ENCODE measurements at regions of chr2 and their contacts with region 1.

Region 1: GRCh38 chr2:10448208-10448645 is at the start of gene ODC1:
- DNase-seq: peak; percentile 90
- H3K4me3 Mint-ChIP-seq: peak within 1 kb of the TSS; percentile 100
- H3K27ac Mint-ChIP-seq: peak within 1 kb of the TSS; percentile 98
- H3K4me1 Mint-ChIP-seq: peaks cover 45% of the 10 kb centered on the region
- H3K27me3 Mint-ChIP-seq: peaks cover 1% of the 10 kb centered on the region
- total RNA-seq, gene ODC1: 235 and 247 TPM in 2 replicates

Region 2: DNA sequence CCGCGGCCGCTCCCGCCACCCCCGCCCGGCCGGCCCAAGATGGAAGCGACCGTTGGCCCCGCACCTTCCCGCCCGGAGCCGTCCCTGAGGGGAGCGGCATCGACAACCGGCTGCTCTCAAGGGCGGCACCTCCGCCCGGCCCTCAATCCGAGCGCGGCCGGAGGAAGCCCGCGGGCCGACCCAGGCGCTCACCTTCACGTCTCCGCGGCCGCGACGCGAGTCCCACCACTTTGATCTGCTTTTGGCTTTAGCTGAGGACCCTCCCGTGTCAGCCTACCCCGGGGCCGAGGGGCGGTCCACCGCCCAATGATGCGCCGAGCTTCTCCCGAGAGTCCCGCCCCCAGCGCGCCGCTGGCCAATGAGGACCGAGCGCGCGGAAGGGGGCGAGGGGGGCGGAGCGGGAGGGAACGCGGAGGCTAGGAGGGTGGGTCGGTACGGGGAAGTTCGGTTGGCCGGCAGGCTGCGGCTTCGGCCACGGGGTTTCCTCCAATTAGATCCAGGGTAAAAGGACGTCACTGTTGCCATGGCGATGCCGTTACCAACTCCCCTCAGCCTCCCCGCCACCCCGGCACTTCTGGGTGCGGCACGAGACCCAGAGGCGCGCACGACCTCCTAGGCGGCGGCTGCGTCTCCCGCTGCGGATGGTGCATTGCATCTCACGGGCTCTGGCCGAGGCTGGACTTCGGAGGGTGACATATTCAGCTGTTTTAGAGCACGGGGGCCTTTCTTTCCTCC is 817.3 kb before region 1 on chr2 and contains the start of gene YWHAQ:
- intact Hi-C with region 1: loop called (anchors 10 kb)
- DNase-seq: peak; percentile 97
- H3K4me3 Mint-ChIP-seq: peak within 1 kb of the TSS; percentile 97
- H3K27ac Mint-ChIP-seq: peak within 1 kb of the TSS; percentile 93
- H3K4me1 Mint-ChIP-seq: peaks cover 45% of the 10 kb centered on the region
- H3K27me3 Mint-ChIP-seq: peaks cover 9% of the 10 kb centered on the region
- total RNA-seq, gene YWHAQ: 290 and 311 TPM in 2 replicates

Region 3: GRCh38 chr2:10302479-10303180 is 145.6 kb before region 1 on chr2 and contains the start of gene HPCAL1:
- intact Hi-C with region 1: loop called (anchors 1 kb)
- DNase-seq: peak; percentile 80
- H3K4me3 Mint-ChIP-seq: peak within 1 kb of the TSS; percentile 99
- H3K27ac Mint-ChIP-seq: peak within 1 kb of the TSS; percentile 90
- H3K4me1 Mint-ChIP-seq: peaks cover 73% of the 10 kb centered on the region
- H3K27me3 Mint-ChIP-seq: peaks cover 4% of the 10 kb centered on the region
- total RNA-seq, gene HPCAL1: 59.6 and 62.4 TPM in 2 replicates

Region 4: GRCh38 chr2:10493636-10494281 is 45.5 kb after region 1 on chr2:
- intact Hi-C with region 1: loop called (anchors 1 kb)
- DNase-seq: peak; percentile 55
- H3K4me3 Mint-ChIP-seq: no peak overlapping the region
- H3K27ac Mint-ChIP-seq: no peak overlapping the region
- H3K4me1 Mint-ChIP-seq: peaks cover 11% of the 10 kb centered on the region
- H3K27me3 Mint-ChIP-seq: peaks cover 24% of the 10 kb centered on the region

Region 5: GRCh38 chr2:10654069-10654468 is 205.8 kb after region 1 on chr2:
- intact Hi-C with region 1: loop called (anchors 1 kb)
- DNase-seq: peak; percentile 34
- H3K4me3 Mint-ChIP-seq: peak overlapping the region; percentile 74
- H3K27ac Mint-ChIP-seq: peak overlapping the region; percentile 93
- H3K4me1 Mint-ChIP-seq: peaks cover 54% of the 10 kb centered on the region
- H3K27me3 Mint-ChIP-seq: no peaks in the 10 kb centered on the region